ENCODE measurements at regions of chr10 and their contacts with region 1.

Region 1: GRCh38 chr10:52004342-52004949 is 305.1 kb upstream of the CSTF2T start:
- DNase-seq: no peak
- ATAC-seq: no peak
- H3K4me3 Mint-ChIP-seq: no peak overlapping the region
- H3K27ac Mint-ChIP-seq: no peak overlapping the region
- H3K4me1 Mint-ChIP-seq: no peaks in the 10 kb centered on the region
- H3K27me3 Mint-ChIP-seq: no peaks in the 10 kb centered on the region
- CTCF ChIP-seq: no peak

Region 2: GRCh38 chr10:51063659-51064535 is 940.5 kb before region 1 on chr10:
- CTCF ChIA-PET with region 1: no interaction called
- POLR2A ChIA-PET with region 1: no interaction called
- intact Hi-C with region 1: loop called (anchors 1 kb)
- DNase-seq: no peak
- ATAC-seq: no peak
- H3K4me3 Mint-ChIP-seq: no peak overlapping the region
- H3K27ac Mint-ChIP-seq: no peak overlapping the region
- H3K4me1 Mint-ChIP-seq: no peaks in the 10 kb centered on the region
- H3K27me3 Mint-ChIP-seq: no peaks in the 10 kb centered on the region
- CTCF ChIP-seq: no peak

Region 3: GRCh38 chr10:51389415-51390321 is 614.8 kb before region 1 on chr10:
- CTCF ChIA-PET with region 1: interaction called, 3 read pairs
- POLR2A ChIA-PET with region 1: no interaction called
- intact Hi-C with region 1: loop called (anchors 1 kb)
- DNase-seq: no peak
- ATAC-seq: peak; percentile 42
- H3K4me3 Mint-ChIP-seq: no peak overlapping the region
- H3K27ac Mint-ChIP-seq: no peak overlapping the region
- H3K4me1 Mint-ChIP-seq: no peaks in the 10 kb centered on the region
- H3K27me3 Mint-ChIP-seq: no peaks in the 10 kb centered on the region
- CTCF ChIP-seq: no peak

Region 4: DNA sequence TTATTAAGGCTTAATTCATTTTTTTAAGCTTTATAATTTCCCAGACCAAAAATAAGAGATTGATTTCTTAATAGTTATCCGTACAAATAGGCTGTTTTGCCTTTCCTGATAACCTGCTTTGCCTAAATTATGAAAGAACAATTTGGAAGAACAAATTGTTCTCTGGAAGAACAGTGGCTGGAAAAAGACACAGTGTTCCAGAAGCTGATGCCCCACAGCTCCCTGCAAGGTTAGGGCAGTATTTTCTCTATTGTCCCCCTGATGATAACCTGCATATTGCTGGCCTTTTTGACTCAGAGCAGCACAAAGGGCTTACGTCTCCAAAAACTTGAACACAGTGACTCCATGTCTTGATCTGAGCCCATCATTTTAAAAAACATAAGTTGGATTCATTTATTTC is 456.5 kb before region 1 on chr10:
- CTCF ChIA-PET with region 1: no interaction called
- POLR2A ChIA-PET with region 1: no interaction called
- intact Hi-C with region 1: no loop called
- DNase-seq: no peak
- ATAC-seq: no peak
- H3K4me3 Mint-ChIP-seq: no peak overlapping the region
- H3K27ac Mint-ChIP-seq: no peak overlapping the region
- H3K4me1 Mint-ChIP-seq: no peaks in the 10 kb centered on the region
- H3K27me3 Mint-ChIP-seq: no peaks in the 10 kb centered on the region
- CTCF ChIP-seq: no peak

Measured in activated B cell treated with CpG ODN at 0.5 μM for 24 hours (primary cell).